Activated T-helper 1 cell treated with anti-CD3 and anti-CD28 coated beads, Interleukin-12 subunit alpha, Interleukin-12 subunit beta, Interleukin-2, Interleukin-4 antibody, amounts not matched to agents 30 ng/mL and 10 ng/mL and 1 ng/mL, durations not matched to agents 14 hours and 24 hours and 36 hours (primary cell): ENCODE measurements at regions of chr3 and their contacts with region 1.

Region 1: DNA sequence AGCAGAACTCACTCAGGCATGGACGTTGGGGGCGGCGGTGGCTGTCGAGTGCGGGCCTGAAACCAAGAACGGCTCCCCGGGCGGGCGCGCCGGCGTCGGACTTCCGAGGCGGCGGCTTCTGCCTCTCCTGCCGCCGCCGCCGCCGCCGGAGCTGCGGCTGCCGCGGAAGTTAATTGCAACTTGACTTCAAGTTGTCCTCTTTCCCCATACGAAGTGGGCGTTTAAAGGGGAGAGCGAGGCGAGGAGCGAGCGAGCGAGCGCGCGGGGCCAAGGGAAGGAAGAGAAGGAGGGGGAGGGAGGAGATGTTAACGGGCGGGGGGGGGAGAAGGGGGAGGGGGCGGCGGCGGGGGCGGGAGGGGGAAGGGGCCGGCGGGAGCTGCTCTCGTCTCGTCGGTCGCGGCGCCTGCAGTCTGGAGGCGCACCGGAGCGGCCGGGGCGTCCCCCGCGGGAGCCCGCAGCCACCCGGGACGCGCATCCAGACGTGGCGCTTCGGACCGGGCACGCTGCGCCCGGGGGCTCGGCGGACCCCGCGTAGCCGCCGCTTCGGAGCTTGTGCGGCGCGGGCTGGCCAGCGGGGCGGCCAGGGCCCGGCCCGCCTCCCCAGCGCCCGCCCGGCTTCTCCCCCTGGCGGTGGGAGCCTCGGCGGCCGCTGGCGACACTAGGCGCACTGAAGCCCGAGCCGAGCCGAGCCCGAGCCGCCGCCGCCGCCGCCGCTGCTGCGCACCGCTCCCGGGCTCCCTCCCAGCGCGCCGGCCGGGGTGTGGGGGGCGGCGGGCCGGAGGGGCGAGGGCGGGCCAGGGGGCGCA is 19.7 kb upstream of the SATB1 start:
- DNase-seq: peak; percentile 75
- H3K4me3 Mint-ChIP-seq: peak overlapping the region; percentile 99
- H3K27ac Mint-ChIP-seq: peak overlapping the region; percentile 97
- H3K4me1 Mint-ChIP-seq: peaks cover 54% of the 10 kb centered on the region
- H3K27me3 Mint-ChIP-seq: peaks cover 1% of the 10 kb centered on the region

Region 2: GRCh38 chr3:18401300-18401961 is 43.4 kb before region 1 on chr3:
- intact Hi-C with region 1: loop called (anchors 5 kb)
- DNase-seq: no peak
- H3K4me3 Mint-ChIP-seq: peak overlapping the region; percentile 73
- H3K27ac Mint-ChIP-seq: peak overlapping the region; percentile 83
- H3K4me1 Mint-ChIP-seq: peaks cover 100% of the 10 kb centered on the region
- H3K27me3 Mint-ChIP-seq: no peaks in the 10 kb centered on the region

Region 3: DNA sequence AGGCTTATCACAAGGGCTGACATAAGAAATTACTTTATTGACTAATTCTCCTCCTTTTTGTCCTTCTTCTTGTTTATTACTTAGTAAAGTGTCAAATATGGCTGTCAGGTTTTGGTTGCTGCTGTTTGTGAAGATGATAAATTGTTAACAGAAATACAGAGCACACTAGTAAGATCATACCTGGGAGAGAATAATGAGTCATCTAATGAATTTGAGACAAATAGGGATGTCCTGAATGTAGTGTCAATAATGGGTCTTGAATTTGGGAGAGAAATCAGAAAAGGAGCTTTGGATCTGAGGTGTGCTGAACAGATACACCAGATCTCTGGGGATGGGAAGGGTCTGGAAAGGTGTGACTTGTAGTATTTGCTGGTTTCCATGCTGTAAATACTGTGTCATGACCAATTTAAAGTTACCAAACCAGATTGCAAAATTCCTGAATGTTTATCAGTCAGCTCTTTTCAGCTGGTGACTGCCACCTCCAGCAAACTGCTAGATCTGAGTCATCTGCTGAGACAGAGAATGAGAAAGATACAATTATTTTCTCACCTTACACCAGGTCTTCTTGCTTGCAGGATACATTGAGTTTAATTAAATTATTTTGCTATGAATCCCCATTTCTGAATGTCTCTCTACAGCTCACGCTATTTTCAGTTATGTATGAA is 57.0 kb after region 1 on chr3:
- intact Hi-C with region 1: loop called (anchors 5 kb)
- DNase-seq: no peak
- H3K4me3 Mint-ChIP-seq: no peak overlapping the region
- H3K27ac Mint-ChIP-seq: peak overlapping the region; percentile 62
- H3K4me1 Mint-ChIP-seq: peaks cover 47% of the 10 kb centered on the region
- H3K27me3 Mint-ChIP-seq: no peaks in the 10 kb centered on the region

Region 4: GRCh38 chr3:18649666-18650363 is 205.0 kb after region 1 on chr3:
- intact Hi-C with region 1: loop called (anchors 1 kb)
- DNase-seq: peak; percentile 70
- H3K4me3 Mint-ChIP-seq: peak overlapping the region; percentile 59
- H3K27ac Mint-ChIP-seq: peak overlapping the region; percentile 94
- H3K4me1 Mint-ChIP-seq: peaks cover 94% of the 10 kb centered on the region
- H3K27me3 Mint-ChIP-seq: no peaks in the 10 kb centered on the region

Region 5: GRCh38 chr3:18717598-18717997 is 272.8 kb after region 1 on chr3:
- intact Hi-C with region 1: loop called (anchors 1 kb)
- DNase-seq: no peak
- H3K4me3 Mint-ChIP-seq: peak overlapping the region; percentile 64
- H3K27ac Mint-ChIP-seq: peak overlapping the region; percentile 98
- H3K4me1 Mint-ChIP-seq: peaks cover 67% of the 10 kb centered on the region
- H3K27me3 Mint-ChIP-seq: no peaks in the 10 kb centered on the region

Region 6: DNA sequence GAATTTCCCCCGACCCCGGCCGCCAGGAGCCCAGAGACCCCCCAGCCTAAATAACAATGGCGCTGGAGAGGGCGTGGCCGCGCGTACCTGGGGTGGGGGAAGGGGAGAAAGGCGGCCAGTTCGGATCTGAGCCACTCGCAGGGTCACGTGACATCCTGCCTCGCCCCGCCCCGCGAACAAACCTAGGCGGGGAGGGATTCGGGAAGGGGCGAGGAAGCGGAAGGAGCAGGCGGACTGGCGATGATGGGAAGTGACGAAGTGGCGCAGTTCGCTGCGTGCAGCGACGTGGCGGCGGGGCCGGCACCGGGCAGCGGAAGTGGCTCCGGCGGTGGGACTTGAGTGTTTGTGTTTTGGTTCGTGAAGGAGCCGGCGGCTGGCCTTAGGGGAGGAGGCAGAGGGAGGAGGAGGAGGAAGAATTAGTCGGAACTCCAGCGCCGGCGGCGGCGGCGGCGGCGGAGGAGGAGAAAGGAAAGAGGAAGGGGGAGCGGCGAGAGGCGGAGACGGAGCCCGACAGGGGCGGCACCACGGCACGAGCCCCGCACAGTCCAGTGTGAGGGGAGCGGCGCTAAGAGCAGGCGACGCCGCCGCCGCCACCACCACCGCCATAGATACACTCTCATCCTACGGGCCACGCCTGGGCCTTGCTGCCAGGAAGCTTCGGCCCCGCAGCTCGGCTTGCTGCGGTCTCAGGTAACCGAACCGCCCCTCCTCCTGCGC is 1502.2 kb after region 1 on chr3 and contains the start of gene RAB5A:
- intact Hi-C with region 1: loop called (anchors 5 kb)
- DNase-seq: peak; percentile 96
- H3K4me3 Mint-ChIP-seq: peak within 1 kb of the TSS; percentile 92
- H3K27ac Mint-ChIP-seq: peak within 1 kb of the TSS; percentile 97
- H3K4me1 Mint-ChIP-seq: peaks cover 47% of the 10 kb centered on the region
- H3K27me3 Mint-ChIP-seq: no peaks in the 10 kb centered on the region
- total RNA-seq, gene RAB5A: 62.2 and 64.0 TPM in 2 replicates